ENCODE measurements at regions of chr5 and their contacts with region 1.

Region 1: GRCh38 chr5:126339215-126339805 is 83.9 kb upstream of the GRAMD2B start:
- DNase-seq: peak; percentile 61
- ATAC-seq: peak; percentile 36; the same call in 1 of the 3 replicates
- H3K4me3 ChIP-seq: no peak overlapping the region
- H3K27ac ChIP-seq: no peak overlapping the region
- H3K4me1 ChIP-seq: no peaks in the 10 kb centered on the region
- H3K27me3 ChIP-seq: no peaks in the 10 kb centered on the region
- CTCF ChIP-seq: peak; percentile 77
- EP300 ChIP-seq: no peak
- POLR2A ChIP-seq: no peak
- RAD21 ChIP-seq: peak; percentile 69; the same call in 1 of the 2 replicates

Region 2: GRCh38 chr5:126536874-126537273 is 197.6 kb after region 1 on chr5:
- CTCF ChIA-PET with region 1: interaction called, 28 read pairs
- POLR2A ChIA-PET with region 1: no interaction called
- in situ Hi-C with region 1: no loop called
- intact Hi-C with region 1: loop called (anchors 1 kb)
- DNase-seq: no peak
- ATAC-seq: no peak
- H3K4me3 ChIP-seq: no peak overlapping the region
- H3K27ac ChIP-seq: no peak overlapping the region
- H3K4me1 ChIP-seq: peaks cover 14% of the 10 kb centered on the region
- H3K27me3 ChIP-seq: no peaks in the 10 kb centered on the region; a peak in 1 of 5 replicates
- CTCF ChIP-seq: no peak
- EP300 ChIP-seq: no peak
- POLR2A ChIP-seq: no peak
- RAD21 ChIP-seq: no peak

Region 3: GRCh38 chr5:126544087-126544740 is 204.9 kb after region 1 on chr5:
- CTCF ChIA-PET with region 1: interaction called, 28 read pairs
- POLR2A ChIA-PET with region 1: no interaction called
- in situ Hi-C with region 1: no loop called
- intact Hi-C with region 1: loop called (anchors 1 kb)
- DNase-seq: peak; percentile 58
- ATAC-seq: peak; percentile 86
- H3K4me3 ChIP-seq: no peak overlapping the region
- H3K27ac ChIP-seq: peak overlapping the region; percentile 60
- H3K4me1 ChIP-seq: peaks cover 26% of the 10 kb centered on the region
- H3K27me3 ChIP-seq: no peaks in the 10 kb centered on the region
- CTCF ChIP-seq: peak; percentile 79
- EP300 ChIP-seq: no peak
- POLR2A ChIP-seq: no peak
- RAD21 ChIP-seq: peak; percentile 57; the same call in 1 of the 2 replicates

Region 4: GRCh38 chr5:126600631-126601511 is 261.6 kb after region 1 on chr5 and contains the start of gene PHAX:
- CTCF ChIA-PET with region 1: no interaction called
- POLR2A ChIA-PET with region 1: no interaction called
- in situ Hi-C with region 1: no loop called
- intact Hi-C with region 1: loop called (anchors 1 kb)
- DNase-seq: peak; percentile 60
- ATAC-seq: peak; percentile 98
- H3K4me3 ChIP-seq: peak within 1 kb of the TSS; percentile 85 to 96 (median 91)
- H3K27ac ChIP-seq: peak within 1 kb of the TSS; percentile 66
- H3K4me1 ChIP-seq: peaks cover 50% of the 10 kb centered on the region
- H3K27me3 ChIP-seq: no peaks in the 10 kb centered on the region; a peak in 1 of 5 replicates
- CTCF ChIP-seq: peak; percentile 84
- EP300 ChIP-seq: no peak
- POLR2A ChIP-seq: peak; percentile 74 to 88
- RAD21 ChIP-seq: peak; percentile 19; the same call in 1 of the 2 replicates
- total RNA-seq, gene PHAX: 59.7 and 95.0 TPM in 2 replicates

Measured in HepG2 (cell line).